Ovary (tissue), 10 donors: ENCODE measurements at regions of chr14 and their contacts with region 1.

Region 1: GRCh38 chr14:88092529-88092928 is 87.6 kb downstream of the GPR65 start:
- DNase-seq: no peak
- H3K4me3 ChIP-seq: no peak overlapping the region
- H3K27ac ChIP-seq: no peak overlapping the region
- H3K4me1 ChIP-seq: no peaks in the 10 kb centered on the region
- H3K27me3 ChIP-seq: no peaks in the 10 kb centered on the region
- CTCF ChIP-seq: no peak
- EP300 ChIP-seq: no peak
- POLR2A ChIP-seq: no peak

Region 2: DNA sequence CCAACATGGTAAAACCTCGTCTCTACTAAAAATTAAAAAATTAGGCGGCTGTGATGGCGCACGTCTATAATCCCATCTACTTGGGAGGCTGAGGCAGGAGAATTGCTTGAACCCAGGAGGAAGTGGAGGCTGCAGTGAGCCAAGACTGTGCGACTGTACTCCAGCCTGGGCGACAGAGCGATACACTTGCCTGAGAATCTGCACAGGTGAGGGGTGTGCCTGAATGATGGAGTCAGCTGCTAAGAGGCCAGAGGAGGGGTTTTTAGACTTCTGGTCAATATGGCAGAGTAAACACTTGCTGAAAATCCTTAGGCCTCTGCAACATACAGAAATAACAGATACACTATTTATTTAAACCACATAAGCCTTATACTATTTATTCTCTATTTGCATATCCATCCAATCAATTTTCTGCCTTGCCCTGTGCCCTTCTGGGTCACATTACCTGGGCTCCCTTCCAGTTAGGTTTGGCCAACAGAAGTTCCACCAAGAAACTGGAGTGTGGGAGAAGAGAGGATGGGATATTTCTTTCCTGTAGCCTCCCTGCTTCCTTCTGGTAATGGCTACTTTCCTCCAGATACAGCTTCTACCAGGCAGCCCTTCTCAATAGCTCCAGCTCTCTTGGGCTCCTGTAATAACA is 1744.4 kb after region 1 on chr14:
- intact Hi-C with region 1: loop called in 1 of 4 experiments (anchors 5 kb)
- DNase-seq: no peak
- H3K4me3 ChIP-seq: no peak overlapping the region
- H3K27ac ChIP-seq: no peak overlapping the region
- H3K4me1 ChIP-seq: no peaks in the 10 kb centered on the region
- H3K27me3 ChIP-seq: no peaks in the 10 kb centered on the region
- CTCF ChIP-seq: no peak
- EP300 ChIP-seq: no peak
- POLR2A ChIP-seq: no peak